HEK293T (cell line): ENCODE measurements at regions of chr15 and their contacts with region 1.

Region 1: GRCh38 chr15:98083203-98083910 is 122.9 kb downstream of the ARRDC4 start:
- DNase-seq: peak; percentile 34

Region 2: GRCh38 chr15:97903971-97904572 is 179.3 kb before region 1 on chr15:
- CTCF ChIA-PET with region 1: interaction called, 11 read pairs
- POLR2A ChIA-PET with region 1: no interaction called
- DNase-seq: peak; percentile 90